ENCODE measurements at regions of chr20 and their contacts with region 1.

Region 1: GRCh38 chr20:5126512-5127203 is at the start of gene CDS2:
- DNase-seq: peak; percentile 99 to 100 (median 100)
- ATAC-seq: peak; percentile 81
- H3K4me3 ChIP-seq: peak within 1 kb of the TSS; percentile 68 to 83
- H3K4me3 Mint-ChIP-seq: peak within 1 kb of the TSS; percentile 95
- H3K27ac ChIP-seq: peak within 1 kb of the TSS; percentile 98 to 99
- H3K27ac Mint-ChIP-seq: peak within 1 kb of the TSS; percentile 99
- H3K4me1 ChIP-seq: peaks cover 26% of the 10 kb centered on the region
- H3K4me1 Mint-ChIP-seq: peaks cover 33% of the 10 kb centered on the region
- H3K27me3 ChIP-seq: no peaks in the 10 kb centered on the region
- H3K27me3 Mint-ChIP-seq: no peaks in the 10 kb centered on the region
- CTCF ChIP-seq: peak; percentile 54
- total RNA-seq, gene CDS2: 68.7 to 70.9 TPM

Region 2: GRCh38 chr20:4813863-4814695 is 312.6 kb before region 1 on chr20:
- CTCF ChIA-PET with region 1: no interaction called
- POLR2A ChIA-PET with region 1: no interaction called
- intact Hi-C with region 1: loop called (anchors 5 kb)
- DNase-seq: peak in 8 of 9 experiments; percentile 43 to 96 (median 72)
- ATAC-seq: peak; percentile 69
- H3K4me3 ChIP-seq: peak overlapping the region; percentile 56 to 58
- H3K4me3 Mint-ChIP-seq: peak overlapping the region; percentile 86
- H3K27ac ChIP-seq: peak overlapping the region; percentile 92 to 98
- H3K27ac Mint-ChIP-seq: peak overlapping the region; percentile 100
- H3K4me1 ChIP-seq: peaks cover 65% of the 10 kb centered on the region
- H3K4me1 Mint-ChIP-seq: peaks cover 84% of the 10 kb centered on the region
- H3K27me3 ChIP-seq: no peaks in the 10 kb centered on the region
- H3K27me3 Mint-ChIP-seq: no peaks in the 10 kb centered on the region
- CTCF ChIP-seq: no peak

Region 3: GRCh38 chr20:5039255-5039657 is 87.4 kb before region 1 on chr20:
- CTCF ChIA-PET with region 1: no interaction called
- POLR2A ChIA-PET with region 1: no interaction called
- intact Hi-C with region 1: no loop called
- DNase-seq: peak; percentile 19 to 89 (median 57)
- ATAC-seq: peak; percentile 87
- H3K4me3 ChIP-seq: peak overlapping the region in 1 of 2 experiments; percentile 10
- H3K4me3 Mint-ChIP-seq: peak overlapping the region; percentile 51
- H3K27ac ChIP-seq: peak overlapping the region in 1 of 2 experiments; percentile 69
- H3K27ac Mint-ChIP-seq: peak overlapping the region; percentile 55
- H3K4me1 ChIP-seq: no peaks in the 10 kb centered on the region
- H3K4me1 Mint-ChIP-seq: peaks cover 15% of the 10 kb centered on the region
- H3K27me3 ChIP-seq: no peaks in the 10 kb centered on the region
- H3K27me3 Mint-ChIP-seq: peaks cover 2% of the 10 kb centered on the region
- CTCF ChIP-seq: no peak

Measured in CD8-positive, alpha-beta T cell (primary cell).